HepG2 (cell line): ENCODE measurements at regions of chr1 and their contacts with region 1.

Region 1: DNA sequence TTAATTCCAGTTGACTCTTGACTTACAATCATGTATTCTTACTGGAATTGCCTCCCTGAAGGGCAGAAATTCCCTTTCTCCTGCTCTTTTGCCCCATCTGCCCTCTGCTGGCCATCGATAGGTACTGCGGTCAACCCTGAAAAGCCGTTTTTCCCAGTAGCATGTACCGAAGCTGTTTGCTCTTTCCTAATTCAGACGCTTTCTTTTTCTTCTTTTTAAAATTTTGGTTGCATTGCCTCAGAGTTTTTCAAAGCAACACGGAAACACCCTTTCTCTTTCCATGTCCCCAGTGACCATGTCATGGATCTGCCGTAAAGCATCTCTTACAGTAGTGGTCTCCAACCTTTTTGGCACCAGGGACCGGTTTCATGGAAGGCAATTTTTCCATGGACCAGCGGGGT is 164.2 kb upstream of the C1orf21 start:
- DNase-seq: peak; percentile 25
- ATAC-seq: peak; percentile 57; the same call in 1 of the 3 replicates
- H3K4me3 ChIP-seq: no peak overlapping the region
- H3K27ac ChIP-seq: no peak overlapping the region
- H3K4me1 ChIP-seq: no peaks in the 10 kb centered on the region
- H3K27me3 ChIP-seq: peaks cover 0 to 7% of the 10 kb centered on the region in 2 experiments; a peak in 3 of 5 replicates
- CTCF ChIP-seq: peak; percentile 80
- EP300 ChIP-seq: no peak
- POLR2A ChIP-seq: no peak
- RAD21 ChIP-seq: 0 out of 2 replicates have a peak, but pooled peaks have one; percentile 25

Region 2: GRCh38 chr1:183942933-183943693 is 279.5 kb before region 1 on chr1:
- CTCF ChIA-PET with region 1: no interaction called
- POLR2A ChIA-PET with region 1: no interaction called
- in situ Hi-C with region 1: loop called (anchors 25 kb)
- intact Hi-C with region 1: no loop called
- DNase-seq: no peak
- ATAC-seq: no peak
- H3K4me3 ChIP-seq: no peak overlapping the region
- H3K27ac ChIP-seq: no peak overlapping the region
- H3K4me1 ChIP-seq: peaks cover 15% of the 10 kb centered on the region
- H3K27me3 ChIP-seq: no peaks in the 10 kb centered on the region
- CTCF ChIP-seq: no peak
- EP300 ChIP-seq: no peak
- POLR2A ChIP-seq: no peak
- RAD21 ChIP-seq: no peak

Region 3: DNA sequence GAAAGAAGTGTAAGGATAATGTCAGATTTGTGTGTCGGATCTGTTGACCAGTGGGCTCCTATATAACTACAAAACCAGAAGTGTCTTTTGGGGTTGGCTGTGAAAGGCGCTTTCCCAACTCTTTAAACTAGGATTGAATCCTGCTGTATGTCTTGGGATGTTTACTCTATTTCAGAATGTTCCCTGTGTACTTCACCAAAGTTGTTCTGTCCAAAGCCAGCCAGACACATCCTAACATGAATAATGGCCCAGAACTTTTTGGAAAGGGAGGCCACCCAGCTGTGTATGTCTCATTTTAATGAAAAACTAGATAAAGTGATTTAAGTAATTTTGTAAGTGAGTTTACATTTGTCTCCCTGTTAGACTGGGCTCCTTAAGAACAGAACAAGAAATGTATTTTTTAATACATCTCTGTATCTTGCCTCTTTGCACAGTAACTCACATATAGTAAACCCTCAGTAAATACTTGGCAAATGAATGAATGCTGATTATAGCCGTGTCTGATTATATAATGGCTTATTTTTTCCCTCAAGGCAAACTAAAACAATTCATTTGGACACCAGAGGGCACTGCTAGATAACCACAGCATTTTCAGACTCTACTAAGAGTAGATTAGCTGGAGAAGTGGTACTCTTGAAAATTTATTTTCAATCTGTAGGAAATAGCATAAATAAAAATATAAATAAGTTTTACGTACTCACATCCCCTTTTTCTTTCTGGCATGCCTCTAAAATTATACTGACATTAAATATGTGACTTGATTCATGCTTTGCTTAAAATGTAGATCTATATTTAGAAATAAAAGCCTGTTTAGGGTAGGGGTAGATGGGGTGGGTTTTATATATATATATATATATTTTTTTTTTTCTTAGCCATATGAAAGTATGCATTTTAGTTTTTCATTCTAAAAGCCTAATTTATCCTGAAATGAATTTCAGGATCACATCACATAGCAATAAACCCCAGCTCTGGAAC is 147.3 kb before region 1 on chr1:
- CTCF ChIA-PET with region 1: interaction called, 24 read pairs
- POLR2A ChIA-PET with region 1: no interaction called
- in situ Hi-C with region 1: loop called (anchors 5 kb)
- intact Hi-C with region 1: loop called (anchors 1 kb)
- DNase-seq: peak; percentile 57
- ATAC-seq: peak; percentile 65; the same call in 2 of the 3 replicates
- H3K4me3 ChIP-seq: no peak overlapping the region
- H3K27ac ChIP-seq: no peak overlapping the region
- H3K4me1 ChIP-seq: no peaks in the 10 kb centered on the region
- H3K27me3 ChIP-seq: no peaks in the 10 kb centered on the region
- CTCF ChIP-seq: peak; percentile 66
- EP300 ChIP-seq: no peak
- POLR2A ChIP-seq: no peak
- RAD21 ChIP-seq: peak; percentile 67

Region 4: GRCh38 chr1:184210031-184210430 is 12.6 kb before region 1 on chr1:
- CTCF ChIA-PET with region 1: no interaction called
- POLR2A ChIA-PET with region 1: no interaction called
- in situ Hi-C with region 1: no loop called
- intact Hi-C with region 1: no loop called
- DNase-seq: no peak
- ATAC-seq: no peak
- H3K4me3 ChIP-seq: no peak overlapping the region
- H3K27ac ChIP-seq: no peak overlapping the region
- H3K4me1 ChIP-seq: no peaks in the 10 kb centered on the region
- H3K27me3 ChIP-seq: peaks cover 0 to 3% of the 10 kb centered on the region in 2 experiments; a peak in 1 of 5 replicates
- CTCF ChIP-seq: no peak
- EP300 ChIP-seq: no peak
- POLR2A ChIP-seq: no peak
- RAD21 ChIP-seq: no peak

Region 5: GRCh38 chr1:184242507-184242943 is 19.9 kb after region 1 on chr1:
- CTCF ChIA-PET with region 1: no interaction called
- POLR2A ChIA-PET with region 1: no interaction called
- in situ Hi-C with region 1: no loop called
- intact Hi-C with region 1: no loop called
- DNase-seq: no peak
- ATAC-seq: no peak
- H3K4me3 ChIP-seq: no peak overlapping the region
- H3K27ac ChIP-seq: no peak overlapping the region
- H3K4me1 ChIP-seq: no peaks in the 10 kb centered on the region
- H3K27me3 ChIP-seq: no peaks in the 10 kb centered on the region
- CTCF ChIP-seq: no peak
- EP300 ChIP-seq: no peak
- POLR2A ChIP-seq: no peak
- RAD21 ChIP-seq: no peak

Region 6: GRCh38 chr1:184563308-184563707 is 340.7 kb after region 1 on chr1:
- CTCF ChIA-PET with region 1: no interaction called
- POLR2A ChIA-PET with region 1: no interaction called
- in situ Hi-C with region 1: no loop called
- intact Hi-C with region 1: loop called (anchors 5 kb)
- DNase-seq: no peak
- ATAC-seq: no peak
- H3K4me3 ChIP-seq: no peak overlapping the region
- H3K27ac ChIP-seq: no peak overlapping the region
- H3K4me1 ChIP-seq: no peaks in the 10 kb centered on the region
- H3K27me3 ChIP-seq: no peaks in the 10 kb centered on the region
- CTCF ChIP-seq: peak; percentile 33
- EP300 ChIP-seq: no peak
- POLR2A ChIP-seq: no peak
- RAD21 ChIP-seq: no peak

Region 7: DNA sequence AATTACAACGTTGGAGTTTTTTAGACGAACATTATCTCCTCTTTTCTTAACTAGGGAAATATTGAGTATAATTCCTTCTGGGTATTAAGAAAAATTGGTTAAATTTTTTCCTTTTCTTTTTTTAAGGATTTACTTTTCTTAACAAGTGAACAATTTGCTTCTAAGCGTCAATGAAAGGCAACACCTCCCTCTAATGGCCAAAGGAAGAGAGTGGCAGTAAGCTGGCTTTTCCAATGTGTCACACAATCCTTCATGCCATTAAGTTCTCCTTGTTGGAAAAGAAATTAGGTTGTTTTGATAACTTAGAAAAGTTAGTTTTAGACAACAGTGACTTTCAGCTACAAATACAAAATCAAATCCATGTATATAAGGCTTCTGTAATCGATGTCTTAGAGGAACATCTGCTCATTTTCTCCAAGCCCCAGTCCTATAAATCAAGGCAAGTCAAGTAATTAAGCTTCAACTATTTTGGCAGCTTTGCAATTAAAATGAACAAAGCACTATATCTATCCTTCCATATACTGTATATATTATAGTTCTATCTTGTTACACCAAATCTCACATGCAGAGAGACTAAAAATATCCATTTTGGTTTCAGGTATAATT is 469.2 kb after region 1 on chr1:
- CTCF ChIA-PET with region 1: no interaction called
- POLR2A ChIA-PET with region 1: no interaction called
- in situ Hi-C with region 1: no loop called
- intact Hi-C with region 1: loop called (anchors 10 kb)
- DNase-seq: peak; percentile 24
- ATAC-seq: peak; percentile 62
- H3K4me3 ChIP-seq: no peak overlapping the region
- H3K27ac ChIP-seq: no peak overlapping the region
- H3K4me1 ChIP-seq: no peaks in the 10 kb centered on the region
- H3K27me3 ChIP-seq: no peaks in the 10 kb centered on the region
- CTCF ChIP-seq: peak; percentile 65
- EP300 ChIP-seq: no peak
- POLR2A ChIP-seq: no peak
- RAD21 ChIP-seq: no peak